ENCODE measurements at regions of chr3 and their contacts with region 1.

Region 1: DNA sequence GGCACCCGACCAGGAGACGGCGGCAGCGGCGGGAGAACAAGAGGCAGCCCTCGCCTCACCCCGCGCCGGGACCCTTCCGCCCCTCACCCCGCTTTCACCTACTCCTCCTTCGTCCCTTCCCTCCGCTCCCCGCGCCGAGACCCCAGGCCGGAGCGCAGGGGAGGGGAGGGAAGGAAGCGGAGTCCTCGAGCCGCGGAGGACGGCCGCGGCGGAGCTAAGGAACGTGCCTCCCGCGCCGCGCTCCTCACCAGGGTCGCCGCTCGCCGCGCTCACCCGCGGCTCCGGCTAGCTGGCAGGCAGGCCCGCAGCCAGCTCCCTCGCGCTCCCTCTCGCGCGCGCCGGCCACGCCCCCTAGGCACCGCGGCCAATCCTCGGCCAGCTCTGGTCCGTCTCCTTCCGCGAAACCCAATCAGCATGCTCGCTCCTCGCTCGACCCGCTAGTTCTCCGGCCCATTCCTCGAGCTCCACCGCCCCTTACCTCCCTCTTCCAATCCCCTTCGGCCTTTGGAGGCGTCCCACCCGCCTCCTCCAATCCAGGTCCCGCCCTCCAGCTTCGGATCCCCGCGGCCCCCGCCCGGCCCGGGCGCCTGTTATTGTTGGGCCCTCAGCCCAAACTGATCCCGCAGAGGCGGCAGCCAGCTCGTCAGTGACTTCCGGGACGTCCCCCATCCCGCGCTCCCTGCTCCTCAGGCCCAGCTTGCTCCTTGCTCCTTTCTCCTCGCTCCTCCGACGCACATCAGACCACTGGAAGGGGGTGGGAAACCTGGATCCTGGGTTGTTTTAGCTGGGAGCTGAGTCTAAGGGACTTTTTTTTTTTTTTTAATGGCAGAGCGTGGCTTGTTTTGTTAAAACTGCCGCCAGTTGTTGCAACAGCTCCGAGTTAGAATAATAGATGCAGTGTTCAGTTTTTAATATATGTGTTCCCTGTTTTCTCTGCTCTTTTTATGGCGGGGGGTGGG is at the start of gene DCBLD2:
- DNase-seq: peak; percentile 98 to 99
- ATAC-seq: peak; percentile 99 to 100 (median 99)
- H3K4me3 ChIP-seq: peak within 1 kb of the TSS; percentile 97
- H3K27ac ChIP-seq: peak within 1 kb of the TSS; percentile 88
- H3K4me1 ChIP-seq: peaks cover 13% of the 10 kb centered on the region
- H3K27me3 ChIP-seq: no peaks in the 10 kb centered on the region
- CTCF ChIP-seq: no peak
- total RNA-seq, gene DCBLD2: 4.1 to 13.9 (median 10.2) TPM

Region 2: GRCh38 chr3:98994128-98994762 is 92.6 kb after region 1 on chr3:
- intact Hi-C with region 1: loop called in 1 of 2 experiments (anchors 5 kb)
- DNase-seq: no peak
- ATAC-seq: peak in 1 of 4 donors; percentile 46
- H3K4me3 ChIP-seq: no peak overlapping the region
- H3K27ac ChIP-seq: no peak overlapping the region
- H3K4me1 ChIP-seq: no peaks in the 10 kb centered on the region
- H3K27me3 ChIP-seq: no peaks in the 10 kb centered on the region
- CTCF ChIP-seq: peak; percentile 74

Measured in psoas muscle (tissue), 8 donors.